Heart left ventricle (tissue), 16 donors: ENCODE measurements at regions of chr17 and their contacts with region 1.

Region 1: GRCh38 chr17:45394913-45395568 is 37.6 kb downstream of the ARHGAP27 start:
- DNase-seq: peak; percentile 71 to 83 (median 77)
- ATAC-seq: peak; percentile 29 to 71 (median 63)
- H3K4me3 ChIP-seq: peak overlapping the region in 10 of 12 donors; percentile 2 to 42 (median 30)
- H3K27ac ChIP-seq: no peak overlapping the region
- H3K4me1 ChIP-seq: peaks cover 0 to 19% (median 4%) of the 10 kb centered on the region in 12 donors
- H3K27me3 ChIP-seq: no peaks in the 10 kb centered on the region
- CTCF ChIP-seq: peak; percentile 61 to 82 (median 72)
- POLR2A ChIP-seq: no peak

Region 2: GRCh38 chr17:43619705-43620104 is 1775.3 kb before region 1 on chr17:
- intact Hi-C with region 1: no loop called
- DNase-seq: no peak
- ATAC-seq: peak in 1 of 4 donors; percentile 17
- H3K4me3 ChIP-seq: no peak overlapping the region
- H3K27ac ChIP-seq: no peak overlapping the region
- H3K4me1 ChIP-seq: peaks cover 0 to 12% (median 0%) of the 10 kb centered on the region in 12 donors
- H3K27me3 ChIP-seq: no peaks in the 10 kb centered on the region
- CTCF ChIP-seq: no peak
- POLR2A ChIP-seq: no peak

Region 3: DNA sequence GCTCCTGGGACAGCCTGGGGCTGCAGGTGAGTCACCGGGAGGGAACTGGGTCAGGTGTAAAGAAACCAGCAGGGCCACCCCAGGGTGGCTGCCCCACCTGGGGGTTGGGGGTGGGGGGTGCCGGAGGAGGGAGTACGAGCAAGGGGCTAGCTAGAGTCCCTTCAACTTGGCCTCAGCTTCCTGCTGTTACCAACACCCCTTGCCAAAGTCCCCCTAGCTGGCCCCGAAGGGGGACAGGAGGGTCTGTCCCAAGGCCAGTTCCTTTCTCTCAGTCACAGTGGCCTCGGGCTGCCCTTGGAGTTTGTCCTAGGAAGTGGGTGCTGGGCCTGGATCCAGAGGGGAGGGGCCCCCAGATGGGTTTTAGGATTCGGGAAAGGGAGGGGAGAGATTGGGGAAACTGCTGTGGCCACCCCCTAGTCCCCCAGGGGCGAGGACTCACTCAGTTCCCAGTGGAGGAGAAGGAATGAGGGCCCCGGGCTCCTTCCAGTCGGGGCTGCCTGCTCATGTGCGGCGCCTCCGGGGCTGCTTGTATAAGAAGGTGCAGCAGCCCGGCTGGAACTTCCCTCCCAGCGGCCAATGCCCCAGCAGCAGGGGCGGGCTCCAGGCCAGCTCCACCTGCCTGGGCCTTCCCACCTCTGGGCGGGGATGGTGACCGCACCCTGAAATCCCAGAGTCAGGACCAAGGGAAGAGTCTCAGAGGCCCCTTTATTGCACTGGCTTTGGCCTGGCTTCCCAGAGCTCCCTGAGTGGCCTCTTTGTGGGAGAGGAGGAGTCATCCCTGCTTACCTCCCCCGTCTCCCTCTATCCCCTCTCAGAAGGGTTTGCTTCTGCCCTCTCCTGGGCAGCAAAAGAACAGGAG is 30.3 kb after region 1 on chr17:
- intact Hi-C with region 1: loop called in 5 of 10 experiments (anchors 1 to 2 kb)
- DNase-seq: peak; percentile 56 to 79 (median 70)
- ATAC-seq: peak; percentile 72 to 82 (median 79)
- H3K4me3 ChIP-seq: peak overlapping the region; percentile 10 to 59 (median 47)
- H3K27ac ChIP-seq: peak overlapping the region; percentile 71 to 92 (median 86)
- H3K4me1 ChIP-seq: peaks cover 0 to 48% (median 24%) of the 10 kb centered on the region in 12 donors
- H3K27me3 ChIP-seq: peaks cover 1 to 15% (median 10%) of the 10 kb centered on the region in 9 donors
- CTCF ChIP-seq: peak in 6 of 12 donors; percentile 18 to 57 (median 41)
- POLR2A ChIP-seq: no peak

Region 4: DNA sequence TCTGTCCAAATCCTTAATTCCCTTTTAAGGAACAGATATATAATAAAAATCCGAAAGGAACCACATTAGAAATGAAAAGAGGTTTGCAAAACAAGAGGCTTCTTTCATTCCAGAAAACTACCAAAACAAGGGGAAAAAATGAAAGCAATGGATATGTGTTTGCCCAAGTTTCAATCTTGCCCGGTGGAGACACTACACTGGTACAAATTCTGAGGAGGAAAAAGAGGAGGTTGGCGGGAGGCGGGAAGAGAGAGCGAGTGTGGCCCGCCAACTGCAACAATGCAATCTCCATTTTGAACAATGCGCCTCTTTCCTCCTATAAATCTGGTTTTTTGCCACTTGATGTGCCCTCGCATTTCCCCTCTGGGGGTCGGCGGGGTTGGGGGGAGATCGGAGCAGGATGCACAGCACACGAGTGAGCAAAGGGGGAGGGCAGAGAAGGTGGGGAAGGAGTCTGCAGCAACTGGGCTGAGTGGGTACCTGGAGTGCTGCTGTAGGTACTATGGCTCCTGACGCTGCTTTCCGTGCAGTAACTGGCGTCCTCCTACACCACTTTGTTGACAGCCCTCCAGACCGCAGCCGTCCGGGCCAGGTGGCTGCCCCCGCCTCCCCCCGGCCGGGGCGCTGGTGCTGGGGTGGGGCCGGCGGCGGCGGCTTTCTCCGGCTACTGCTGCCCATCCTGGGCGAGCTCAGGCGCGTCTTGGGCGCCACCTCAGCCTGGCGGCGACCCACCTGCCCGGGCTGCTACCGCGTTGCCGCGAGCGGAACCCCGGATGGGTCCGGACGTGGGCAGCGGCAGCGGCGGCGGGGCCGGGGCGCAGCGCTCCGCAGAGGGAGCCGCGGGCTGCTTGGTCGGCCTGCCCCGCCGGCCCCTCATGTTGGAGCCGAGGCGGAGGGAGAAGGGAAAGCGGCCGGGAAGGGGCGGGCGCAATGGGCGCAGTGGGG is 189.3 kb after region 1 on chr17:
- intact Hi-C with region 1: loop called in 1 of 10 experiments (anchors 10 kb)
- DNase-seq: peak; percentile 51 to 74 (median 59)
- ATAC-seq: peak; percentile 16 to 79 (median 71)
- H3K4me3 ChIP-seq: peak overlapping the region; percentile 57 to 94 (median 82)
- H3K27ac ChIP-seq: peak overlapping the region; percentile 28 to 91 (median 80)
- H3K4me1 ChIP-seq: peaks cover 0 to 26% (median 7%) of the 10 kb centered on the region in 12 donors
- H3K27me3 ChIP-seq: no peaks in the 10 kb centered on the region
- CTCF ChIP-seq: peak in 1 of 12 donors; percentile 4
- POLR2A ChIP-seq: no peak

Region 5: GRCh38 chr17:45834471-45835396 is 439.7 kb after region 1 on chr17:
- intact Hi-C with region 1: loop called in 1 of 10 experiments (anchors 10 kb)
- DNase-seq: peak in 1 of 5 donors; percentile 48
- ATAC-seq: no peak
- H3K4me3 ChIP-seq: no peak overlapping the region
- H3K27ac ChIP-seq: no peak overlapping the region
- H3K4me1 ChIP-seq: no peaks in the 10 kb centered on the region
- H3K27me3 ChIP-seq: peaks cover 0 to 34% (median 0%) of the 10 kb centered on the region in 9 donors
- CTCF ChIP-seq: no peak
- POLR2A ChIP-seq: no peak